MCF 10A (cell line): ENCODE measurements at regions of chr7 and their contacts with region 1.

Region 1: GRCh38 chr7:120987683-120988590 is 574 bp upstream of the CPED1 start:
- DNase-seq: peak; percentile 91
- H3K4me3 Mint-ChIP-seq: peak overlapping the region; percentile 56
- H3K27ac Mint-ChIP-seq: no peak overlapping the region
- H3K4me1 Mint-ChIP-seq: peaks cover 6% of the 10 kb centered on the region
- H3K27me3 Mint-ChIP-seq: peaks cover 49% of the 10 kb centered on the region
- CTCF ChIP-seq: peak; percentile 81

Region 2: GRCh38 chr7:120609136-120609753 is 378.7 kb before region 1 on chr7:
- CTCF ChIA-PET with region 1: no interaction called
- POLR2A ChIA-PET with region 1: no interaction called
- intact Hi-C with region 1: no loop called
- DNase-seq: no peak
- H3K4me3 Mint-ChIP-seq: no peak overlapping the region
- H3K27ac Mint-ChIP-seq: no peak overlapping the region
- H3K4me1 Mint-ChIP-seq: no peaks in the 10 kb centered on the region
- H3K27me3 Mint-ChIP-seq: peaks cover 71% of the 10 kb centered on the region
- CTCF ChIP-seq: no peak

Region 3: GRCh38 chr7:121081327-121081936 is 93.5 kb after region 1 on chr7:
- CTCF ChIA-PET with region 1: interaction called, 69 read pairs
- POLR2A ChIA-PET with region 1: no interaction called
- intact Hi-C with region 1: loop called (anchors 1 kb)
- DNase-seq: peak; percentile 71
- H3K4me3 Mint-ChIP-seq: no peak overlapping the region
- H3K27ac Mint-ChIP-seq: no peak overlapping the region
- H3K4me1 Mint-ChIP-seq: peaks cover 29% of the 10 kb centered on the region
- H3K27me3 Mint-ChIP-seq: no peaks in the 10 kb centered on the region
- CTCF ChIP-seq: peak; percentile 52

Region 4: DNA sequence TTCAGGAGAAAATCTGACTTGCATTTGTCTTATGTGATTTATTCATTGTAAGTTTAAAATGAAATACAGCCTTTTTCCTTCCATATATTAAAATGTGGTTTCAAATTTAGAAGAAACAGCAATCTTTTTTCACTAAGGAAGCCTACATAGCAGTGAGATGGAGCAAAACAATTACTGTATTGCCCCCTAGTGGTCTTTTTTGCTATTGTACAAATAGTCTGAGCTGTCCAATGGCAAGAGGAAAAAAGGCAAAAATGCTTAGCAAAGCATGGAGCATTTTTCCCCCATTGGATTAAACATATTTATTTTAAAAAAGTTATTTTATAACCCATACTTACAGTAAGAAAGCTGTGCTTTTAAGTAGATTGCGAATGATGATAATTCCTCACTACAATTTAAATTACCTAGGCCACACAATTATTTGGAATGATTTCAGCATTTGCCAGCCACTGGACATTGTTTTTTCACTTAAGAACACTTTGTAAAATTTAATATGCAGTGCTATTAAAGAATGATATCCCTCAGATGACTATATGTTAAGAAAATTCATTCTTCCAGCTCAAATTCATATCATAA is 120.1 kb after region 1 on chr7:
- CTCF ChIA-PET with region 1: interaction called, 40 read pairs
- POLR2A ChIA-PET with region 1: interaction called, 3 read pairs
- intact Hi-C with region 1: loop called (anchors 1 kb)
- DNase-seq: peak; percentile 70
- H3K4me3 Mint-ChIP-seq: no peak overlapping the region
- H3K27ac Mint-ChIP-seq: no peak overlapping the region
- H3K4me1 Mint-ChIP-seq: no peaks in the 10 kb centered on the region
- H3K27me3 Mint-ChIP-seq: peaks cover 38% of the 10 kb centered on the region
- CTCF ChIP-seq: peak; percentile 57